HepG2 (cell line): ENCODE measurements at regions of chr21 and their contacts with region 1.

Region 1: DNA sequence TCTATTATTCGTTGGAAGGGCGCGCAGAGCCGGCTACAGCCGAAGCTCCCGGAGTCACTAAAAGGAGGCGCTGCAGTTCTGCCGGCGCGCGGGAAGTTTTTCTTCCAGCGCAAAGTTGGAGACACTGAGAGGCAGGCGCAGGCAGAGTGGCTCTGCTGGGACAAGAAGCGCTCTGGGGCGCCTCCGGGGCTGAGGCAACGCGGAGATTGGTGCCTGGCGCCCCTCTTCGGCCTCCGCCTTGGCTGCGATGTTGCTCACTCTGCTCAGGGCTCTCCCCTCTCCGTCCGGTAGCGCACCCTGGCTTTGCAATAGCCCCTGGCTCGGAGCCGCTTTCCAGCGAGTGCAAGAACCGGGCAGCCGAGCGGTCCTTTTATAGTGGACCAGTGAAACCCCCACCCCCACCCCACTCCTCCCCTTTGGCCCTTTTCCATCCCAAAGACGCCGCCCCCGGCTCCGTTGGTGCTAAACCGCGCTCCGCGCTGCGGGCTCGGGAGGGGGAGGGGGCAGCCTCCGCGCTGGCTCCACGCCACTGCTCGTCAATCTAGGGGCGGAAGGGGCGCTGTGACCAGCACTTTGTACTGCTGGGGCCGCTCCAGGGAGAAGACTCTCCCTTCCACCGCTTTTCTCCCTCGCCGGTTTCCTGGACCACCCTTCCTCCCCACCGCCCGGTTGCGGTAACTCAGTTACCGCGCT is at the start of gene ADAMTS1:
- DNase-seq: peak; percentile 4
- ATAC-seq: peak; percentile 84
- H3K4me3 ChIP-seq: peak within 1 kb of the TSS; percentile 33 to 59 (median 37); a peak in 5 of 6 replicates
- H3K27ac ChIP-seq: no peak within 1 kb of the TSS
- H3K4me1 ChIP-seq: 0 out of 2 replicates have a peak, but pooled peaks cover 27% of the 10 kb centered on the region
- H3K27me3 ChIP-seq: peaks cover 7 to 45% of the 10 kb centered on the region in 2 experiments; a peak in 3 of 5 replicates
- CTCF ChIP-seq: peak; percentile 13; the same call in 1 of the 2 replicates
- EP300 ChIP-seq: no peak
- POLR2A ChIP-seq: no peak
- RAD21 ChIP-seq: no peak
- total RNA-seq, gene ADAMTS1: 0.02 TPM in 1 of 2 replicates, not detected in the other

Region 2: DNA sequence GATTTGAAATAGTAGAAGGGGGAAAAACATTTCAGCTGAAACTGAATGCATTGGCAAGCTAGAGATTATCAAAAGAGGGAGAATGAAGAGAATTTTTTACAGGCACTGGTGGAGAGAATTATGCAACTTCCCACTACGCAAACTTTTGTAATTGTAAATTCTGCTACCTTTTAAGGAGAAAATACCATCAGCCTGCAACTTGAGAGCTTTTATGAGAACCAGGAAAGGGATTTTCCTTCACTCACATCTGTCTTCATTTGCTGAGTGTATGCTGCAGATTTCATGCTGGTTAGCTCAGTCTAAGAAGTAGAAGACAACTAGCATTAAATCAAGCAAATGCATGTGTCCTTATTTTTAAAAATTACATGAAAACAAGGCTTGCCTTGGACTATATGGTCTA is 43.7 kb before region 1 on chr21:
- CTCF ChIA-PET with region 1: no interaction called
- POLR2A ChIA-PET with region 1: no interaction called
- in situ Hi-C with region 1: no loop called
- intact Hi-C with region 1: no loop called
- DNase-seq: no peak
- ATAC-seq: no peak
- H3K4me3 ChIP-seq: no peak overlapping the region
- H3K27ac ChIP-seq: no peak overlapping the region
- H3K4me1 ChIP-seq: no peaks in the 10 kb centered on the region
- H3K27me3 ChIP-seq: no peaks in the 10 kb centered on the region
- CTCF ChIP-seq: no peak
- EP300 ChIP-seq: no peak
- POLR2A ChIP-seq: no peak
- RAD21 ChIP-seq: no peak

Region 3: DNA sequence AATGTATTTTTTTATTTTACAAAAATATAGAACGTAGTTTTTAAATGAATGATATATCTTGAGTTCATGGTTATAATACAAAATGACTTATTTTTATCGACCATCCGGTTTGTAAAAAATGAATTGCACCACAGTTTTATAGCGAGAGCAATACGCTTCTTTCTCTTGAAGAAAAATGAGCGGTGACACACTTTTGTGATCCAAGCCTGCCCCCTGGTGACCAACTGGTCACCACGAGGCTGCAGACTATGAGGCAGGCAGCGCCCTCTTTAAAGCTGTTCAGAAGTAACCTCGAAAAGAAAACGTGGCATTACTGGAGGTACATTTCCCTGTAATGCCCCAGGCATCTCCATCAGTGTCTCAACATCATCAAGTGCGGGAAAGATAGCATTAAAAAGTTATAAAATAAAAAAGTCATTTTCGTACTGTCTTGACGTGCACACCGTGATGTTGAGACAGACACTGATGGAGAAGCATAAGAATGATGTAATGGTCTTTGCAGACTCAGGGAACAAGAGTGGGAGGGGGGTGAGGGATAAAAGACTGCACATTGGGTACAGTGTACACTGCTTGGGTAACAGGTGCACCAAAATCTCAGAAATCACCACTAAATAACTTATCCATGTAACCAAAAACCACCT is 855.9 kb after region 1 on chr21:
- CTCF ChIA-PET with region 1: interaction called, 23 read pairs
- POLR2A ChIA-PET with region 1: no interaction called
- in situ Hi-C with region 1: loop called (anchors 5 kb)
- intact Hi-C with region 1: no loop called
- DNase-seq: peak; percentile 20
- ATAC-seq: peak; percentile 91
- H3K4me3 ChIP-seq: no peak overlapping the region
- H3K27ac ChIP-seq: no peak overlapping the region
- H3K4me1 ChIP-seq: no peaks in the 10 kb centered on the region
- H3K27me3 ChIP-seq: no peaks in the 10 kb centered on the region
- CTCF ChIP-seq: peak; percentile 76
- EP300 ChIP-seq: no peak
- POLR2A ChIP-seq: no peak
- RAD21 ChIP-seq: peak; percentile 69

Region 4: GRCh38 chr21:28336314-28336713 is 1491.1 kb after region 1 on chr21:
- CTCF ChIA-PET with region 1: interaction called, 14 read pairs
- POLR2A ChIA-PET with region 1: no interaction called
- in situ Hi-C with region 1: loop called (anchors 5 kb)
- intact Hi-C with region 1: no loop called
- DNase-seq: peak; percentile 16
- ATAC-seq: no peak
- H3K4me3 ChIP-seq: no peak overlapping the region
- H3K27ac ChIP-seq: no peak overlapping the region
- H3K4me1 ChIP-seq: no peaks in the 10 kb centered on the region
- H3K27me3 ChIP-seq: no peaks in the 10 kb centered on the region
- CTCF ChIP-seq: peak; percentile 61
- EP300 ChIP-seq: no peak
- POLR2A ChIP-seq: no peak
- RAD21 ChIP-seq: peak; percentile 38; the same call in 1 of the 2 replicates

Region 5: GRCh38 chr21:28745131-28746016 is 1900.2 kb after region 1 on chr21:
- CTCF ChIA-PET with region 1: interaction called, 35 read pairs
- POLR2A ChIA-PET with region 1: no interaction called
- in situ Hi-C with region 1: loop called (anchors 5 kb)
- intact Hi-C with region 1: no loop called
- DNase-seq: peak; percentile 70
- ATAC-seq: peak; percentile 96
- H3K4me3 ChIP-seq: peak overlapping the region; percentile 25 to 59 (median 52); a peak in 5 of 6 replicates
- H3K27ac ChIP-seq: no peak overlapping the region
- H3K4me1 ChIP-seq: peaks cover 5% of the 10 kb centered on the region; the same call in 1 of the 2 replicates
- H3K27me3 ChIP-seq: no peaks in the 10 kb centered on the region
- CTCF ChIP-seq: peak; percentile 87
- EP300 ChIP-seq: no peak
- POLR2A ChIP-seq: no peak
- RAD21 ChIP-seq: peak; percentile 90